Sigmoid colon (tissue), 7 donors: ENCODE measurements at regions of chr19 and their contacts with region 1.

Region 1: GRCh38 chr19:488505-489417 is 7.5 kb upstream of the MADCAM1 start:
- DNase-seq: peak; percentile 97
- H3K4me3 ChIP-seq: peak overlapping the region; percentile 82 to 89 (median 84)
- H3K27ac ChIP-seq: peak overlapping the region; percentile 89 to 95 (median 92)
- H3K4me1 ChIP-seq: peaks cover 0 to 16% (median 12%) of the 10 kb centered on the region in 4 donors
- H3K27me3 ChIP-seq: peaks cover 0 to 21% (median 17%) of the 10 kb centered on the region in 3 donors
- CTCF ChIP-seq: no peak
- EP300 ChIP-seq: no peak
- POLR2A ChIP-seq: peak; percentile 36 to 76

Region 2: DNA sequence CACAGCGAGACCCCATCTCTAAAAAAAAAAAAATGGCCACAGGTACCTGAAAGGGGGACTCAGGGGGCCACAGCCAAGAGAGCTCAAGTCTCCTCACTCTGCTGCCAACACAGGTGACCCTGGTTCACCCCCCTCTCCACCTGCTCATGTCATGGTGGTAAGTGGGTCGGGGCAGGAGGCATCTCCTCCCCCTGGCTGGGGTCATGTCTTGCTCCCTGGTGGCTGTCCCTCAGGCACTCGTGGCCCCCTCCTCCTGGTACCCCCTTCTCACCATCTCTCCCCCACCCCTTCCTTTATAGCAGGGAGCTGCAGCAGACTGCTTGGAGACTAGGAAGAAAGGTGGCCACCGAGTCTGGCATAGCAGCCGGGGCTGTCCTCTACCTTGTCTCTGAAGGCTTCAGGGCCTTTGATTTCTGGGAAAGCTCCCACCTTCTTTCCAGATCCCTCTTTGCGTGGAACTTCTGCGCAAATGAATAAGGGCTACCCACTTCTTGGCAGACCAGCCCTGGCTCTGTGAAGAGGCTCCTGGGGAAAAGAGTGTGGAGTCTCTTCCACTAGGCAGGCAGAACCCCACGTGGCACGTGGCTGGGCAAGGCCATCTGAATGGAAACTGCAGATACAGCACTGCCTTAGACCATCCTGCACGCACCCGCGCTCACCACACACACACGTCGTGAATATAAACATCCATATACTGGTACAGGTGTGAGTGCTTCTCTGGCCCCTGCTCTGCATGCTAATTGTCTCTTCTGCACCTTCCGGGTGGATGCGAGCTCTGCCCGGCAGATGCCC is 124.1 kb before region 1 on chr19:
- intact Hi-C with region 1: no loop called
- DNase-seq: no peak
- H3K4me3 ChIP-seq: no peak overlapping the region
- H3K27ac ChIP-seq: no peak overlapping the region
- H3K4me1 ChIP-seq: no peaks in the 10 kb centered on the region
- H3K27me3 ChIP-seq: peaks cover 0 to 32% (median 0%) of the 10 kb centered on the region in 3 donors
- CTCF ChIP-seq: no peak
- EP300 ChIP-seq: no peak
- POLR2A ChIP-seq: no peak

Region 3: DNA sequence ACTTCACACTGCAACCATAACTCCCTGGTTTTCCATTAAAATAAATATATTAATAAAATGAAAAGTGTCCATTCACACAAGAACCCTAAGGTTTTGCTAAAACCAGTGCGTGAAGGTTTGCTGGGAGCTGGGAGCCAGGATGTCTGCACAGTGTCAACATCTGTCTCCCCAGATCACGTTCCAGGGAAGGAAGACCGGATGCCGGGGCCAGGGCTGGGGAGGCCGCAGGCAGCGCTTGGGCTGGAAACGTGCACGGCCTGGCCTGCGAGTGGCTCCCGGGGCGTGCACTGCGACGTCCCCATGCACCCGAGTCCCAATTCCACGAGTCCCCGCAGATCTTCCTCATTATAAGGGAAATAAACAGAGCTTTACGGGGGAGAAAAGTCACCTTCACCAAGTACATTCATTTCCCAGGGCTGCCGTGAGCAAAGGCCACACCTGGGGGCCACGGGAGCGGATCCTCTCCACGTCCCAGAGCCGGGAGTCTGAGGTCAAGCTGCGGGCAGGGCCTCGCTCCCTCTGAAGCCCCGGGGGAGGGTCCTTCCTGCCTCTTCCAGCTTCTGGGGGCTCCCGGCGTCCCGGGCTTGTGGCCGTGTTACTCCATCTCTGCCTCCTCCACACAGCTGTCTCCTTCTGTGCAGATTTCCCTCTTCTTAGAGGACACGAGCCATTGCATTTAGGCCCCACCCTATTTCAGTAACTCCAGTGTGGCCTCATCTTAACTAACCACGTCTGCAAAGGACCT is 40.8 kb before region 1 on chr19:
- intact Hi-C with region 1: loop called (anchors 5 kb)
- DNase-seq: peak; percentile 89
- H3K4me3 ChIP-seq: no peak overlapping the region
- H3K27ac ChIP-seq: peak overlapping the region in 3 of 4 donors; percentile 29 to 76 (median 75)
- H3K4me1 ChIP-seq: peaks cover 0 to 18% (median 18%) of the 10 kb centered on the region in 4 donors
- H3K27me3 ChIP-seq: no peaks in the 10 kb centered on the region
- CTCF ChIP-seq: no peak
- EP300 ChIP-seq: no peak
- POLR2A ChIP-seq: no peak

Region 4: DNA sequence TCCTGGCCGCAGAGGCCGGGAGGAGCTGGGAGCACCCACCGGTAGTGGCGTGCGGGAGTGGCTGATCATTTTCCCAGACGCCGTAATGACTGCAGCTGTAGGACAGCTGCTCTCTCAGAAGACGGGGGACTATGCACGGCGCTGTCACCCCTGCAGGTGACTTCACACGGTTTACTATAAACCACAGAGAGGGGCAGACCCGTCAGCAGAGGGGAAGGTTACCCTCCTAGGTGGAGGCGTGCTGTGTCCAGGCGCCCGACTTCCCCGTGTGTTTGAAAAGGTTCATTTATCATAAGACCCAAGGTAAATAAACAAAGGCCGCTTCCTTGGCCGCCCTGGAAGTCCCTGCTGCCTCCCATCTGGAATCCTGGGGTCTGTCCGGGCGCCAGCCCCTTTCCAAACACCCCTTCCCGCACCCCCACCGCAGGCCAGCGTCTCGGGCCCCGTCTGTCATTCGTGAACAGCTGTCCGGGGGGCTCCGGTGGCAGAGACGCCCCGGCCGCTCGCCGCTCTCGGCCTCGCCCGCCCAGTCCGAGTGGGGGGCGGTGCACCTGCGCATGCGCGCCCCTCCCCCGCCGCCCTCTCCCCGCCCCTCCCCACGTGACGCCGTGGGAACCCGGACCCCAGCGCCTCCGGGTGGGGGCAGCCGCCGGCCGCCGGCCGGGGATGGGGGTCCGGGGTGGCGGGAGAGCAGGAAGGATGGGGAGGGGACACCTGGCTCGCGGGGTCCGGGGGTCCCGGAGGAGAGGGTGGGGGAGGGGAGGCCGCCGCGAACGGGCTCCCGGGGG is 28.8 kb before region 1 on chr19:
- intact Hi-C with region 1: no loop called
- DNase-seq: peak; percentile 89
- H3K4me3 ChIP-seq: peak overlapping the region; percentile 67 to 92 (median 84)
- H3K27ac ChIP-seq: peak overlapping the region; percentile 82 to 90 (median 86)
- H3K4me1 ChIP-seq: peaks cover 0 to 21% (median 18%) of the 10 kb centered on the region in 4 donors
- H3K27me3 ChIP-seq: no peaks in the 10 kb centered on the region
- CTCF ChIP-seq: no peak
- EP300 ChIP-seq: no peak
- POLR2A ChIP-seq: peak in 1 of 2 donors; percentile 52

Region 5: DNA sequence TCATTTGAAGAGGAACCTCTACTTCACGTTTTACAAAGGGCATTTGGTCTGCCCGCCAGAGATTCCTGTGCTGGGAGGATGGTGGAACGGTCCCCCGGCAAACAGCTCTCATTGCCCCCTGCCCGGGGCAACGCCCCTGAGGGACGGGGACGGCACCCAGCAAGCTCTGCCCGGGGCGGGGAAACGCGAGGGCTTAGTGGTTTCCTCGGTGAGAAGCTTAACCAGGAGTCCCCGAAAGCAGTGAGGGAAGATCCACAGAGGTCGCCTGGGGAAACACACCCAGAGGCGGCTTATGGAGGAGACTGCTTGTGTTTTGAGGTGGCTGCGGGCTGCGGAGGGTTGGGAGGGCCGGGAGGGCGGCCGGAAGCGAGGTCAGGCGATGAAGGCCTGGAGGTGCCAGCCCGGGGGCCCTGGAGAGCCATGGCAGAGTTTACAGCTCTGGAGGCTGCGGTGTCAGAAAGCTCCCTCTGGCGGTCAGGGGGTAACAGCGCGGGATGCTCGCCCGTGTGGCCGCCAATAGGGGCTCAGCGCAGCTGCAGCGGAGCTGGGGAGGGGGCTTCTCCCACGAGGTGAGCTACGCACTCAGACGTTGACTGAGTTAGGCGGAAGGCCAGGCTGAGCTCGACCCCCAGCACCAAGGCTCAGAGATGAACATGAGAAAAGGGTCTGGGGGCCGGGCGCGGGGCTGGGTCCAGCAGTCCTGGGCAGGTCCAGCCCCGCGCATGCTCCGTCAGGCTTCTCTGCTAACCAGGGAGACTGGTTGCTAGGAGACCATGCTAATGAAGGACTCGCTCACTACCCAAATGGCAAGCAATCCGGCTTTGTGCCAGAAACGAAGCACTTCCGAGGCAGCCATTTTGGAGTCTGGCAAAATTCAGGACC is 17.9 kb after region 1 on chr19:
- intact Hi-C with region 1: loop called (anchors 1 kb)
- DNase-seq: peak; percentile 100
- H3K4me3 ChIP-seq: peak overlapping the region; percentile 82 to 100 (median 98)
- H3K27ac ChIP-seq: peak overlapping the region; percentile 88 to 98 (median 96)
- H3K4me1 ChIP-seq: peaks cover 0 to 34% (median 31%) of the 10 kb centered on the region in 4 donors
- H3K27me3 ChIP-seq: no peaks in the 10 kb centered on the region
- CTCF ChIP-seq: peak; percentile 96 to 100 (median 99)
- EP300 ChIP-seq: no peak
- POLR2A ChIP-seq: no peak

Region 6: DNA sequence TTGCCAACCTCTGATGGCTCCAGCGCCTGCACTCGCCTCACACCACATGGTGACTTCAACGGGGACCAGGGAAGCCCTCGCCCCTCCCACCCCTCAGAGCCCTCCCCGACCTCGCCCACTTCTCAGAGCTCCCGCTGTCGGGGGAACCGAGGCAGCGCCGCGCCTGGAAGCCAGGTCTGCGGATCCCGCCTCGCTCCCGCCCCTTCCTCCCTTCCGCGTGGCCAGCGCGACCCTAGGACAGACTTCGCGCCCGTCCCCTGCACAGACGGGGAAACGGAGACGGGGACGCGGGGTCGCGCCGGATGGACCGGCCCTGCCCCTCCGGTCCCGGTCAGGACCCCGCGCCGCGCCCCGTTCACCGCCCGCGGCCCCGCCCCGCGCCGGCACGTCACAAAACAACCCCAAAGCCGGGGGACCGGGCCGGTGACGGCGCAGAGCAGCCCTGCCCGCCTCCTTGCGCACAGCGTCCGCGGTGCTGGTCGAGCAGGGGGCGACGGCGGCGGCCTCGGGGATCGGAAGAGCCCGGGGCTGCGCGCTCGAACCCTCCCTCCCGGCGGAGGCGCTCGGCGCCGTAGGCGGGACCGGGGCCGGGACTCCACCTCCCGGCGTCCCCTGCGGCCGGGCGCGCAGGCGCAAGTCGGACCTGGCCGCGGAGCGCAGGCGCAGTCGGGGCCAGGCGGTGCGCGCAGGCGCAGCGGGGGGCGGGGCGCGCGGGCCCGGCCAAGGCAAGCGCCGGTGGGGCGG is 42.4 kb after region 1 on chr19:
- intact Hi-C with region 1: no loop called
- DNase-seq: peak; percentile 91
- H3K4me3 ChIP-seq: peak overlapping the region; percentile 74 to 94 (median 86)
- H3K27ac ChIP-seq: peak overlapping the region; percentile 98 to 100 (median 99)
- H3K4me1 ChIP-seq: peaks cover 0 to 43% (median 38%) of the 10 kb centered on the region in 4 donors
- H3K27me3 ChIP-seq: peaks cover 0 to 13% (median 6%) of the 10 kb centered on the region in 3 donors
- CTCF ChIP-seq: no peak
- EP300 ChIP-seq: no peak
- POLR2A ChIP-seq: no peak